Activated CD4-positive, alpha-beta T cell treated with anti-CD3 and anti-CD28 coated beads, Interleukin-2, amount 10 ng/mL, durations not matched to agents 7 days and 5 days (primary cell): ENCODE measurements at regions of chr12 and their contacts with region 1.

Region 1: DNA sequence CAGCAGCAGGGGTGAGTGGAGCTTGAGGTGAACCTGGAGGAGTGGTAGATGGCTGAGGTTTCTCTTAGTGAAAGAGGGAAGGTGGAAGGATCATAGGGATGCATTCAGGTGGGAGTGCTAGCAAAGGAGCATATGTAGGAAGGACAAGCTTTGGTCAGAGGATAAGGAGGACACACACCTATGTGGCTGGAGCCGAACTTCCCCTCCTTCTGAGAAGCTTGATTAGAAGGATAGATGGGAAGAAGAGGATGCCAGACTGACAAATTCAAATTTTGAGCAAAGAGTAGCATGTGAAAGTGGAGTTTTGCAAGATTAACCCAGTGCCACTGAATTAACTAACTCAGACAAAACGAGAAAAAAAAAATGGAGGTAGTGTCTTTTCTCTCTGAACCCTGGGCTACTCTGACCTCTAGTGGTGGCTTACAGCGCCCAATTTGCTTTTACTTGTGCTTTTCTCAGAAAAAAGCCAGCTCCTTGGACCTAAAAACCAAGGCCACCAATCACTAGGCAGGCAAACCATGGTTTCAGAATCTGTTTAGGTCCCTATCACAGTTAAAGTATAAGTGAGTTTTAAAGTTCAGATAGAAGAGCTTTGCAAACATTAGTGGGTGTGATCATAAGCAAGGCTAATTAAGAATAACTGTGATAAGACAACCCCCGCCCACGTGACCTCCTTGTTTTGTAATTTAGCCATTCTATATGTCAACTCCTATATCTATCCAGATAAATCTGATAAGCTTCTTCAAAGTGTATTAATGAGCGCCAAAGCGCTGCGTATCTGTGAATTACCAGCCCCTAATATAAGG is 15.5 kb downstream of the EMP1 start:
- DNase-seq: peak; percentile 81
- H3K4me3 Mint-ChIP-seq: no peak overlapping the region
- H3K27ac Mint-ChIP-seq: no peak overlapping the region
- H3K4me1 Mint-ChIP-seq: peaks cover 36% of the 10 kb centered on the region
- H3K27me3 Mint-ChIP-seq: no peaks in the 10 kb centered on the region

Region 2: DNA sequence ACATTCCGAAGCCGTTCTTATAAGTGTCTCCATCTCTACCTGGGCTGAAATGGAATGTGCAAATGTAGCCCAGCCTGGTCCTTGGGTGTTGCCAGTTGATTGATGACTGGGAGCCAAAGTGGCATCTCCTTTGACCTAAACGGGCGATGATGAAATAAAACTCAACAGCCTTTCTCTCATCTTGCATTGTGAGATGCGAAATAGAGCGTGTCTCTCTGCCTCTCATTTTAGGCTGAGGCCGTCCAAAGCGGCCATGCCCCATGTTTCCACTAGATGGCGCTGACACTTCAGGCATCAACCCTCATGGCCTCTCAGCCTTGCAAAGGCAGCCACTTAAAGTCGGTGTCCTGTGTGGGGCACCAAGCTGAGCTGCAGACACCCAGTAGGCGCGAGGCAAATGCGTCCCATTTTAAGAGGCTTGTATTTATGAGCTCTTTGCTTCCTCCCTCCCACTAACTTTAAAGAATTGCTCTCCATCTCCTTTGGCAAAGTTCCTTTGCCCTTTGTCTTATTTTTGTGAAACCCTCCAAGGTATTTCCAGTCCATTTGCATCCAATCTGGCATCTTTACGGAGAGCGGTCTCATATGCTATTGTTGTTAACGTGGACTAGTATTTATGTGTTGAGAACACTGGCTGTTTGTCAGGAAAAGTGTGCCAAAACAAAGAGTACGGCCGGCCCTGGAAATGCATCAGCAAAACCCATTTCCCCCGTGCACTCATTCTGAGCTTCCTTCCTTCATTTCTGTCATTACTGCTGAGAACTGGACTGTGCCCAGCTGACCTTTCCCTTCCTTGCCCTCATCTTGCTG is 295.7 kb before region 1 on chr12:
- CTCF ChIA-PET with region 1: interaction called, 15 read pairs
- POLR2A ChIA-PET with region 1: no interaction called
- DNase-seq: peak; percentile 90
- H3K4me3 Mint-ChIP-seq: no peak overlapping the region
- H3K27ac Mint-ChIP-seq: no peak overlapping the region
- H3K4me1 Mint-ChIP-seq: peaks cover 12% of the 10 kb centered on the region
- H3K27me3 Mint-ChIP-seq: peaks cover 12% of the 10 kb centered on the region

Region 3: DNA sequence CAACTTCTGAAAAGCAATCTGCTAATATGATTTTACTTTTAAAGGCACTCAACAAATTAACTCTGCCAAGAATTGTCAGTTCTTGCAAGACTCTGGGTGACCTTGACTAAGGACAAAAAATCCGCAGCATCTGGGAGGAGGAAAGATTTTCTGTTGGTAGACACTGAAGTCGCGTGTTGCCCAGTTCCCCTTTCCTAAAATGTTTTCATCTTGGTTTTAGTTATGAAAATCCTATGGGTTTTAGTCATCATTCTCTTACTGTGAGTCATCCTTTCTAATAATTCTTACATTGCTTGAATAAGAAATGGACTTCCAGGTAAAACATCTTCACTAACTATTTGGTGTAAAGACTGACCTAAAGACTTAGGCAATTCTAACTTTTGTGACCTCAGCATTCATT is 117.7 kb before region 1 on chr12:
- CTCF ChIA-PET with region 1: interaction called, 13 read pairs
- POLR2A ChIA-PET with region 1: interaction called, 8 read pairs
- DNase-seq: no peak
- H3K4me3 Mint-ChIP-seq: no peak overlapping the region
- H3K27ac Mint-ChIP-seq: no peak overlapping the region
- H3K4me1 Mint-ChIP-seq: peaks cover 21% of the 10 kb centered on the region
- H3K27me3 Mint-ChIP-seq: peaks cover 2% of the 10 kb centered on the region

Region 4: DNA sequence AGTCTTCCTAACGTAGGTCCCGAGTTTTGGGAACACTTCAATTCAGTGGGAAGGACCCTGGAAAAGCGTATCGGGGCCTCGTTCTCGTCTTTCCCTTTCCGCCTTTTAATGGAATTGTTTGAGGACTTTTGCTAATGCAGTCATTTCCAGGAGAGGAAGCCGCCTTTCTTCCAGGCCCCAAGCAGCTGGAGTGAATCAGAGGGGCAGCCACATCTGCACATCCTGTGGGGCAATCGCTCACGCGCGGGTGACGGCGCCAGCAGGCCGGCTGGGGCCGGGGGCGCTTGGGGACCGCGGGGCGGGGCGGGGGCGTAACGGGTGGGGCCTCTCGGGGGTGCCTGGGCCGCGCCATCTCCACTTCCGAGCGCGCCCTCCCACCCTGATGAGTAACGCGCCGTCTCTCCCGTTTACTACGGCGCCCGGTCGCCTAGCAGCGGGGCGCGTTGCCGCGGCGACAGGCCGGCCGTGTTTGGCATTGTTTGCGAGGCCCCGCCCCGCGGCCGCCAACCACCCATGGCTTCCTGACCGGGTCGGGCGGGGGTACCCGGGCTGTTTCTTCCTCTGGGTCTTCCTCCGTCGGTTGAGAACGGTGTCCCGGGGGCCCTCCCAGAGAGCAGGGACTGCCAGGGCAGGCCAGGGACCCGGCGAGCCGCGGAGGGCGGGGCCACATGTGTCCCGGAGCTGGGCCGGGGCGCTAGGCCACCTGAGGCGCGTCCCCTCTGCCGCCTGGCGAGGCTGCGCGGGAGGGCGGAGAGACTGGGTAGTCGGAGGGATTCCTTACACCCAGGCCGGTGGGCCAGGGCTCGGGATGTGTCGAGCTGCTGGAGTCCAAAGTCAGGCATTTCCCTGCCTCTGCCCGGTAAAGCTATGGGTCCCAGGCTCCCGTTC is 110.9 kb before region 1 on chr12:
- CTCF ChIA-PET with region 1: interaction called, 17 read pairs
- POLR2A ChIA-PET with region 1: interaction called, 8 read pairs
- DNase-seq: peak; percentile 93
- H3K4me3 Mint-ChIP-seq: peak overlapping the region; percentile 72
- H3K27ac Mint-ChIP-seq: peak overlapping the region; percentile 86
- H3K4me1 Mint-ChIP-seq: peaks cover 56% of the 10 kb centered on the region
- H3K27me3 Mint-ChIP-seq: no peaks in the 10 kb centered on the region

Region 5: DNA sequence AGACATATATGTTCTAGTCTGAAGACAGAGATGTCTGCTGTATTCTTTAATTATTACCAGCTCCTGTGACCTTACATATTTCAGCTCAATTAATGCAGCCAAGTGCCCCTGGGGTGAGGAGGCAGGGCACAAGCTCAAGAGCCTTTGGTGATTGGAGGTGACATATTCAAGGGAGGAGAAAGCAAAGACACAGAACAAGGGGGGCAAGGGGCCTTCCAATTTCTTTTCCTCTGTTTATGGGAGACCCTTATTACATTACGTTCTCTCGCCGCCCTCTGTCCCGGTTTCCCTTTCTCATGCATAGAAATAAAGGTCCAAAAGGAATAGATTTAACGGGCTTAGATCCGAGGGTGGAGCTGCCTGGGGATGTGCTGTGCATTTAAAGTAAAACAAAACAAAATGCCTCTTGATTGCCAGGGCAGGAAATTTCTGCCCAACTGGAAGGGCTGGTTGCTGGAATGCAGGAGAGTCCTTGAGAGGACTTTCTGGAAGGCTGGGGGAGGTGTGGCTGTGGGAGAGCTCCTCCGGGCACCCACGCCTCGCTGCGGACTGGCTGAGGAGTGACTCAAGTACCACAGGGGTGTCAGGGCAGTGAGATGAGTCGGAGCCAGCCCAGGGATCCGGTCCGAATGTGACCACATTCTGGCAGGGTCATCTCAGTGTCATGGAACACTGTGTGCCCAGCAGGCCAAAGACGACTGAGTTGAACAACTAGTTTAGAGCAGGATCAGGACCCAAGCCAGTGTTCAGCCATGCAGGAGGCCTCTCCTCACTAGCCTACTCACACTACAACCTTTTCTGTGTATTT is 76.5 kb before region 1 on chr12:
- CTCF ChIA-PET with region 1: no interaction called
- POLR2A ChIA-PET with region 1: no interaction called
- DNase-seq: no peak
- H3K4me3 Mint-ChIP-seq: no peak overlapping the region
- H3K27ac Mint-ChIP-seq: no peak overlapping the region
- H3K4me1 Mint-ChIP-seq: peaks cover 11% of the 10 kb centered on the region
- H3K27me3 Mint-ChIP-seq: peaks cover 12% of the 10 kb centered on the region

Region 6: GRCh38 chr12:13196130-13196921 is 15.7 kb before region 1 on chr12 and contains the start of gene EMP1:
- CTCF ChIA-PET with region 1: interaction called, 11 read pairs
- POLR2A ChIA-PET with region 1: no interaction called
- DNase-seq: peak; percentile 85
- H3K4me3 Mint-ChIP-seq: peak within 1 kb of the TSS; percentile 72
- H3K27ac Mint-ChIP-seq: peak within 1 kb of the TSS; percentile 87
- H3K4me1 Mint-ChIP-seq: peaks cover 55% of the 10 kb centered on the region
- H3K27me3 Mint-ChIP-seq: peaks cover 18% of the 10 kb centered on the region
- total RNA-seq, gene EMP1: 35.0 to 36.1 TPM

Region 7: DNA sequence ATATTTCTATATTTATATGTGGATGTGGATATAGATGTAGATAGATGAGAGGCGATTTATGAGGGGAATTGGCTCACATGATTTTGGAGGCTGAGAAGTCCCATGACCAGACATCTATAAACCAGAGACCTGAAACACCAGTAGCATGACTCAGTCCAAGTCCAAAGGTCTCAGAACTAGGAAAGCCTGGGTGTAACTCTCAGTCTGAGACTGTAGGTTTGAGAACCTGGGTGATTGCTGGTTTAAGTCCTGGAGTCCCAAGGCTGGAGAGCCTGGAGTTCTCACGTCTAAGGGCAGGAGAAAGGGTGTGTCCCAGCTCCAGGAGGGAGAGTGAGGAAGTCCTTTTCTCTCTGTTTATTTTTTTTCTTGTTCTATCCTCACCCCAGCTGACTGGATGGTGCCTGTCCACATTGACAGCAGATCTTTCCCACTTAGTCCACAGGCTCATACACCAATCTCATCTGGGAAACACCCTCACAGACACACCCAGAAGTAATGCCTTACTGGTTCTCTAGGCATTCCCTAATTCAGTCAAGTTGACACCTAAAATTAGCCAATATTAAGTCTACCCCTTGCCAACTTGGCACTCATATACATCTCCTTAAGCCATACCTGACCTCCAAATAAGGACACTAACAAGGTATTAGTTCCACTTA is 29.9 kb after region 1 on chr12:
- CTCF ChIA-PET with region 1: no interaction called
- POLR2A ChIA-PET with region 1: no interaction called
- DNase-seq: no peak
- H3K4me3 Mint-ChIP-seq: no peak overlapping the region
- H3K27ac Mint-ChIP-seq: no peak overlapping the region
- H3K4me1 Mint-ChIP-seq: no peaks in the 10 kb centered on the region
- H3K27me3 Mint-ChIP-seq: peaks cover 25% of the 10 kb centered on the region

Region 8: DNA sequence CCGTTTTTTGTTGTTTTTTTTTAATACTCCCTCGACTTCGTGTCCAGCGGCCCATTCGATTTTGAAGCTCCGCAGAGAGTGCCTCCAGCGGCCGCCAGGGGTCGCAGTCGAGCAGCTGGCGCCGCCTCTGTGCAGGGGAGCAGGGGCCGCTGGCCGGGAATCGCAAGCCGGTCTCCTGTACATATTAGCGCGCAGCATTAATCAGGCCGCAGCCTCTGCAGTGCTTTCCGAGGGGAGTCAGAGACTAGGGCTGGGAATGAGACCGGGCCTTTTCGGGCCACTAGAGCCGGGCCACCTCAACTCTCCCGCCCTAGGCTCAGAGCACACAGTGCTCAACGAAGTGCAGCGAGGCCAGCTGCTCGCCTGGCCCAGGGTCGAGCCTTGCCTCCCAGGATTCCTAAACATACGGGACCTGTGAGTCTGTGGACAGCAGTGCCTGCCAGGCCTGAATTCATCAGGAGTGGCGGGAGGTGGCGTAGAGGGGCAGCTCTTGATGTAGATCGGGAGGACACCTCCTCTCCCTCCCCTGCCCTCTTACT is 66.3 kb after region 1 on chr12:
- CTCF ChIA-PET with region 1: no interaction called
- POLR2A ChIA-PET with region 1: no interaction called
- DNase-seq: peak; percentile 50
- H3K4me3 Mint-ChIP-seq: no peak overlapping the region
- H3K27ac Mint-ChIP-seq: no peak overlapping the region
- H3K4me1 Mint-ChIP-seq: peaks cover 2% of the 10 kb centered on the region
- H3K27me3 Mint-ChIP-seq: peaks cover 37% of the 10 kb centered on the region

Region 9: DNA sequence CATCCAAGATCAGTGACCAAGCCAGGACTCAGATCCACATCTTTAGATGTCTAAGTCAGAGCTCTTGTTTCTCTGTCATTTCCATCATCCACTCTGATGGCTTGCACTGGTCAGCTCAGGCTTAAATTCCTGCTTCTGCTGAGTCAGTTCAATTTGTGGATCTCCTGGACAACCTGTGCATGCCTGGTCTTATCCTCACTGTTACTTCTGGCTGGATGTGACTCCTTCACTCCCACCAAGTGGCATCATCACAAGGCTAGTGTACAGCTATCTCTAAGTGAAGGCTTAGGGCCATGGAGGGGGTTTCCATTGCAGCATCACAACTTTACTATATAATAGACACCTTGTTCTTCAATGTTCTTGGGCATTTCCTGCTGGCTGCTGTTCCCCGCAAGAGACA is 87.4 kb after region 1 on chr12:
- CTCF ChIA-PET with region 1: no interaction called
- POLR2A ChIA-PET with region 1: no interaction called
- DNase-seq: no peak
- H3K4me3 Mint-ChIP-seq: no peak overlapping the region
- H3K27ac Mint-ChIP-seq: no peak overlapping the region
- H3K4me1 Mint-ChIP-seq: no peaks in the 10 kb centered on the region
- H3K27me3 Mint-ChIP-seq: peaks cover 18% of the 10 kb centered on the region